Posterior vena cava (tissue), 2 donors: ENCODE measurements at regions of chr6 and their contacts with region 1.

Region 1: DNA sequence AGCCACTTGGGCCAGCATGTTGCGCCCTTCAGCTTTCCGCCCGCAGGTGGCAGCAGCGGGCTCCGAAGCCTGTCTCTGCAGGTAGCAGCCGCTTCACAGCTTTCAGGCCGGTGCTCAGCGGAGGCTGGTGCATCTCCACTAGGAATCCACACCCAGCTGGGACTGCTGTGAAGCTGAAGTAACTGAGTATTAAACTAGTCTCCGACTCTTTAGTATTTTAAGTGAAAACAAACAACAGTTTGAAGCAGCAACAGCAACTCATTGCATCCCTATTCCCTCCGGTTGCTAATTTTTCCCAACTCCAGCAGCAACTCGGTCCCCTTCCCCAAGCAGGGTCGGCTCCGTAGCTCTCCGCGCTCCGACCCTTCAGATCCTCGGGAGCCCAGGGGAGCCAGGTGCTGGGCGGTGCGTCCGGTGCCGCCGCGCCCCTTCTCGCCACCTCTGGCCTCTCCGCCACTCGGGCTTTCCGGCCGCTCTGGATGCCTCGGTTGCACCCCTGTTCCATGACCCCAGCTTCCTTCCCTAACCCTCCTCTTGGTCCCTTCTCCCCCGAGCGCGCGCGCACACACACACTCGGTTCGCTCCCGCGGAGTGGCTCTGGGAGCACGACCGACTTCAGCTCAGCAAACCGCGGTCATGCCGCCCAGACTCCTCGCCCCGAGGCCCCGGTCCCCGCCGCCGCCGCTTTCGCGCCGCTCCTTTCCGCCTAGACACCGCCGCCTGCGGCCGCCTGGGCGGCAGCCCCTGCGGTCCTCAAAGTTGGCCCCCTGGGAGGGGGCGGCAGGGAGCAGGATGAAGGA is 768 bp upstream of the NKAIN2 start:
- DNase-seq: peak; percentile 90

Region 2: DNA sequence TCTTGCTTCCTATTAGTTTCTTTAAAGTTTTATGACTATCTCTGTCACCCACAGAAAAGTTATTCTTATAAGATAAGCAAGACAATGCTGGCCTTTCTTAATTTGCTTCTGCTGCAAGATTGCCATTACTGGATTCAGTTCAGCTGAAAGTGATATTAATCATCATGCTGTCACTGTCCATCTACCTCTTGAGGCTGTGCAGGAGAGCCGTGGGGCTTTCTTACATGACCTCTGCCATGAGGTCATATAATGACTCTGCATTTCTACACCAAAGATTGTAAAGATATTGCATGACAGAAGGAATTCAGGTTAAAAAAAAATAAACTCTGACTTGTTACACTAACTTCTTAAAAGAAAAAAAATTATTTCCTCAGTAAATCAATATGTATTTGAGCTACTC is 273.1 kb before region 1 on chr6:
- intact Hi-C with region 1: no loop called
- DNase-seq: no peak

Region 3: GRCh38 chr6:123841067-123841896 is 38.4 kb after region 1 on chr6:
- intact Hi-C with region 1: no loop called
- DNase-seq: no peak

Region 4: DNA sequence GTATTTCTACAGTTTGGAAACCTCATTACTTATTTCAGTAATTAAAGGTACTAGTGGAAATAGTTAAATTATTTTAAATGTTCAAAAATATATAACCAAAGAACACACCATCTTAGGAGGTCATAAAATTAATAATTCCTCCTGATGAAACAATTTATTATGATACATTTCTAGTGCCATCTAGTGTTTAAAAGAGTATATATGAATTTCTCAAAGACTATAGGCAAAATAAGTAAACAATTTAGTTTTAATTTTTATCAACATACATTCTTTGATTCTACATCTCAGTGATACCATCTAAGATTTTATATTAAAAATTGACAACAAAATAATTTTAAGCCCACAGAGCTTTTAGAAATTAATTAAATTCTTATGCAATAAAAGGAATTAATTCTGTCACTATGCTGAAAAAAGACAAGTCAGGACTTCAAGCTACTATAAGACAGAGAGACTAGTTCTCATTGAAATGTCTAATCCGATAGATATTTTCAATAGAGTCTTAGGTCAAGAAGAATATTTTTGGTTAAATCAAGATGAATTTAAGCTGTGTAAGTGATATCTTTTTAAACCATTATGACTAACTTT is 1051.5 kb after region 1 on chr6:
- intact Hi-C with region 1: loop called in 1 of 2 experiments (anchors 10 kb)
- DNase-seq: no peak